GM18951 (cell line): ENCODE measurements at regions of chr2 and their contacts with region 1.

Region 1: DNA sequence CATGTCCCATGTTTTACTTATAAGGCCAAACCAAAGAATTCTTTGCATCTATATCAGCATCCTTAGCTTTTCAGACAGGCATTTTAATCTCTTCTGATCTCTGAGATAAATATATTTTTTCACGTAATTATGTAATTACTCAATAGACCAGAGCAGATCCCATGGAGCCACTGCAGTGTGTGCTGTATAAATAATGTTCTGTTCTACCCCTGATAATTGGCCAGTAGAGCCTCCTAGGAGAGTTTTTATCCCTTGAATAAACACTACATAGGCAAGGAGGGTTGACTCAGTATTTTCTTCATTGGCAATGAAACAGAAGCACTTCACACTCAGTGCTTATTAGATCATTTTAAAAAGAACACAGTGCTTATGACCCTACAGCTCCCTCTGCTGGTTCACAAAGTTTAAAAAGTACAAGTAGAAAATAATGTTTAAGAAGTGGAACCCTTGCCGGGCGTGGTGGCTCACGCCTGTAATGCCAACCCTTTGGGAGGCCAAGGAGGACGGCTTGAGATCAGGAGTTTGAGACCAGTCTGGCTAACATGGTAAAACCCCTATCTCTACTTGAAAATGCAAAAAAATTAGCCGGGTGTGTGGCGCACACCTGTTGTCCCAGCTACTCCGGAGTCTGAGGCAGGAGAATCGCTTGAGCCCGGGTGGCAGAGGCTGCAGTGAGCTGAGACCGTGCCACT is 91.9 kb downstream of the PPP1R1C start:
- POLR2A ChIP-seq: no peak

Region 2: DNA sequence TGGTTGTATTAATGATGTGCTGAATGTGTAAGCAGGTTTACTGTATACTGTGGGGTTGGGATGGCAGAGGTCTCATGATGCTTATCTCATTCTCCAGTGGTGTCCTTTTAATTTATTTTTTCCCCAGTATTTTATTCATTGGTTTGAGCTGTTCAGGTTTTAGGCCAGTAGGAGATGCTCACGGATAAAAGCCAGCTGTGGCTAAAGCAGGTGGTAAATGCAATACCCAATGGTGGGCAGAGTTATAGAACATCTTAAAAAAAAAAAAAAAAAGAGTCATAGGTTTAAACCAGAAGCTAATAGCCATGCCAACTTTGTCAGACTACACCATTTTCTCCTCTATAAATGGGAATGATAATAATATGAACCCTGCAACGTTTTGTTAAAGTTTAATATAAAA is 339.5 kb before region 1 on chr2:
- in situ Hi-C with region 1: loop called (anchors 10 kb)
- POLR2A ChIP-seq: no peak

Region 3: GRCh38 chr2:181934694-181935093 is 142.9 kb before region 1 on chr2:
- in situ Hi-C with region 1: no loop called
- POLR2A ChIP-seq: no peak

Region 4: GRCh38 chr2:182456784-182457183 is 379.2 kb after region 1 on chr2:
- in situ Hi-C with region 1: no loop called
- POLR2A ChIP-seq: no peak